HCT116 (cell line): ENCODE measurements at regions of chr10 and their contacts with region 1.

Region 1: GRCh38 chr10:101569838-101570766 is 18.0 kb downstream of the POLL start:
- DNase-seq: peak; percentile 65
- ATAC-seq: peak; percentile 89
- H3K4me3 ChIP-seq: peak overlapping the region; percentile 62 to 66
- H3K27ac ChIP-seq: peak overlapping the region; percentile 48; the same call in 1 of the 2 replicates
- H3K4me1 ChIP-seq: peaks cover 11 to 22% of the 10 kb centered on the region in 2 experiments
- H3K27me3 ChIP-seq: no peaks in the 10 kb centered on the region
- CTCF ChIP-seq: peak in 2 of 3 experiments; percentile 82 to 87; a peak in 4 of 6 replicates
- POLR2A ChIP-seq: peak; percentile 11
- RAD21 ChIP-seq: no peak

Region 2: DNA sequence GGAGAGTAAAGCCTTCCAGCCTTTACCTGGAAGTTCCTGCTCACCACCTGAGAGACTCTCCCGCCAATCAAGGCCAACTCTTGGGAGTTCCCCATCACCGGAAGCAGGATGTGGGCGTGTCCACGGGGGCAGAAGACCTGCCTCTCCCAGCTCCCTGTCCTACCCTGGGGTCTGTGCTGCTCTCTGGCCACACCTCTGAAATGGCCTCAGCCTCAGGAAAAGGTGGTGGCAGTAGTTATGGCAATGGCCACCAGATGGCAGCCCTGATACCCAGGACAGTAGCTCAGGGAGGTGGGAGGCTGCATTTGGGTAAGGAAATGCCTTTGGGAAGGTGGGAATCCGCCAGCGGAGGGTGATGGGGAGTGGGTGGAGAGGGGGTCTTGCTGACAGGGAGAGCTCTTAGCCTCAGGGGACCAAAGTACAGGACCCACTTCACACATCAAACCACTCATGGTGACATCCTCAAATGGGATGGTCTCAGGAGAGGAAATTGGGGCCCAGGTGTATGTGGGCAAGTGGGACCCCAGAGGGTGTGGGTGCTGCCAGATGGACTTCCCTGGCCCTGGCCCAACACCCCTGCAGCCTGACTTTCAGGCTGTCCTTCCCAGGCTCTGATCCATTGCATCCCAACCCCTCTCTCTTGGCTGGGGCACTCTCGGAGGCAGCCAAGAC is 474.4 kb before region 1 on chr10:
- CTCF ChIA-PET with region 1: interaction called, 13 read pairs
- POLR2A ChIA-PET with region 1: no interaction called
- RAD21 ChIA-PET with region 1: interaction called in 1 of 2 experiments, 6 read pairs
- intact Hi-C with region 1: no loop called
- DNase-seq: peak; percentile 94
- ATAC-seq: peak; percentile 100
- H3K4me3 ChIP-seq: peak overlapping the region; percentile 23 to 36
- H3K27ac ChIP-seq: peak overlapping the region; percentile 20; the same call in 1 of the 2 replicates
- H3K4me1 ChIP-seq: peaks cover 0 to 24% of the 10 kb centered on the region in 2 experiments; a peak in 2 of 4 replicates
- H3K27me3 ChIP-seq: peaks cover 6% of the 10 kb centered on the region; the same call in 1 of the 2 replicates
- CTCF ChIP-seq: peak; percentile 97 to 99 (median 99)
- POLR2A ChIP-seq: no peak
- RAD21 ChIP-seq: peak; percentile 91

Region 3: DNA sequence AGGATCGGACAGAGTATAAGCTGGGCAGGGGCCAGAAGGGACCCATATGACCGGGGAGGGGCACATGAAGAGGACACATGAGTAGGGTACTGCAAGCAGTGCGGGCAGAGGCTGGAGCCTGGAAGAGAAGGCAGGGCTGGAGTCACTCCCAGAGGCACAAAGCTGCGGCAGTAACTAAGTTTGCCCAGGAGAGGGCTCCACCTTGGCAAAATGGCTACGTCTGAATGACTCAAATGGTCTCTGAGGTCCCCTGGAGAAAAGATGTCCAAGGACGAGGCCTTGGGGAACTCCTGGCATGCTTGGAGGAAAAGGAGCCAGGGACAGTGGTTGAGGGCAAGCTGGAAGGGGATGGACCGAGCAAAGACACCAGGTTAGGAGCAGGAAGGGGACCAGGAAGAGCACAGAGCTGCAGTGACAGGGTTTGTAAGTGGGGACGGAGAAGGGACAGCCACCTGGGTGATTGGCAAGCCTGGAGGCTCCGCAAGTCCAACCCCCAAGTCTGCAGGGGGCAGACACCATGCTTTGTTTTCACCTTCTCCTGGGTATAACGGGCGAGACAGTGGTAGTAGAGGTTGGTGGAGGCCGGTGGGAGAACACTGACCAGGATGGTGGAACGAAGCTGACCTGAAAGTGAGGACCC is 297.8 kb before region 1 on chr10:
- CTCF ChIA-PET with region 1: interaction called, 5 read pairs
- POLR2A ChIA-PET with region 1: no interaction called
- RAD21 ChIA-PET with region 1: no interaction called
- intact Hi-C with region 1: loop called (anchors 1 kb)
- DNase-seq: peak; percentile 69
- ATAC-seq: peak; percentile 96
- H3K4me3 ChIP-seq: no peak overlapping the region
- H3K27ac ChIP-seq: no peak overlapping the region; the same call in 1 of the 2 replicates
- H3K4me1 ChIP-seq: peaks cover 9 to 15% of the 10 kb centered on the region in 2 experiments
- H3K27me3 ChIP-seq: no peaks in the 10 kb centered on the region
- CTCF ChIP-seq: peak; percentile 79 to 98 (median 96)
- POLR2A ChIP-seq: no peak
- RAD21 ChIP-seq: peak; percentile 68

Region 4: GRCh38 chr10:101297901-101298486 is 272.1 kb before region 1 on chr10:
- CTCF ChIA-PET with region 1: interaction called, 51 read pairs
- POLR2A ChIA-PET with region 1: interaction called, 3 read pairs
- RAD21 ChIA-PET with region 1: interaction called, 7 to 9 read pairs
- intact Hi-C with region 1: loop called (anchors 2 kb)
- DNase-seq: peak; percentile 64
- ATAC-seq: peak; percentile 94
- H3K4me3 ChIP-seq: no peak overlapping the region
- H3K27ac ChIP-seq: no peak overlapping the region
- H3K4me1 ChIP-seq: peaks cover 0 to 5% of the 10 kb centered on the region in 2 experiments; a peak in 3 of 4 replicates
- H3K27me3 ChIP-seq: no peaks in the 10 kb centered on the region
- CTCF ChIP-seq: peak; percentile 86 to 97 (median 97)
- POLR2A ChIP-seq: no peak
- RAD21 ChIP-seq: peak; percentile 63

Region 5: GRCh38 chr10:101467286-101467770 is 102.8 kb before region 1 on chr10:
- CTCF ChIA-PET with region 1: interaction called, 20 read pairs
- POLR2A ChIA-PET with region 1: no interaction called
- RAD21 ChIA-PET with region 1: no interaction called
- intact Hi-C with region 1: no loop called
- DNase-seq: peak; percentile 76
- ATAC-seq: peak; percentile 94
- H3K4me3 ChIP-seq: no peak overlapping the region
- H3K27ac ChIP-seq: no peak overlapping the region
- H3K4me1 ChIP-seq: no peaks in the 10 kb centered on the region
- H3K27me3 ChIP-seq: no peaks in the 10 kb centered on the region
- CTCF ChIP-seq: peak; percentile 85 to 99 (median 98)
- POLR2A ChIP-seq: no peak
- RAD21 ChIP-seq: peak; percentile 78

Region 6: GRCh38 chr10:101587725-101588653 is 17.9 kb after region 1 on chr10 and contains the starts of genes DPCD and POLL:
- CTCF ChIA-PET with region 1: interaction called, 17 read pairs
- POLR2A ChIA-PET with region 1: no interaction called
- RAD21 ChIA-PET with region 1: interaction called in 1 of 2 experiments, 5 read pairs
- intact Hi-C with region 1: no loop called
- DNase-seq: peak; percentile 91
- ATAC-seq: peak; percentile 92
- H3K4me3 ChIP-seq: peak within 1 kb of the TSS; percentile 89 to 94
- H3K27ac ChIP-seq: peak within 1 kb of the TSS; percentile 63
- H3K4me1 ChIP-seq: peaks cover 10 to 16% of the 10 kb centered on the region in 2 experiments; a peak in 3 of 4 replicates
- H3K27me3 ChIP-seq: no peaks in the 10 kb centered on the region
- CTCF ChIP-seq: no peak
- POLR2A ChIP-seq: peak; percentile 75
- RAD21 ChIP-seq: no peak
- total RNA-seq, gene DPCD: 39.5 TPM
- total RNA-seq, gene POLL: 51.3 TPM